ENCODE measurements at regions of chr7 and their contacts with region 1.

Region 1: DNA sequence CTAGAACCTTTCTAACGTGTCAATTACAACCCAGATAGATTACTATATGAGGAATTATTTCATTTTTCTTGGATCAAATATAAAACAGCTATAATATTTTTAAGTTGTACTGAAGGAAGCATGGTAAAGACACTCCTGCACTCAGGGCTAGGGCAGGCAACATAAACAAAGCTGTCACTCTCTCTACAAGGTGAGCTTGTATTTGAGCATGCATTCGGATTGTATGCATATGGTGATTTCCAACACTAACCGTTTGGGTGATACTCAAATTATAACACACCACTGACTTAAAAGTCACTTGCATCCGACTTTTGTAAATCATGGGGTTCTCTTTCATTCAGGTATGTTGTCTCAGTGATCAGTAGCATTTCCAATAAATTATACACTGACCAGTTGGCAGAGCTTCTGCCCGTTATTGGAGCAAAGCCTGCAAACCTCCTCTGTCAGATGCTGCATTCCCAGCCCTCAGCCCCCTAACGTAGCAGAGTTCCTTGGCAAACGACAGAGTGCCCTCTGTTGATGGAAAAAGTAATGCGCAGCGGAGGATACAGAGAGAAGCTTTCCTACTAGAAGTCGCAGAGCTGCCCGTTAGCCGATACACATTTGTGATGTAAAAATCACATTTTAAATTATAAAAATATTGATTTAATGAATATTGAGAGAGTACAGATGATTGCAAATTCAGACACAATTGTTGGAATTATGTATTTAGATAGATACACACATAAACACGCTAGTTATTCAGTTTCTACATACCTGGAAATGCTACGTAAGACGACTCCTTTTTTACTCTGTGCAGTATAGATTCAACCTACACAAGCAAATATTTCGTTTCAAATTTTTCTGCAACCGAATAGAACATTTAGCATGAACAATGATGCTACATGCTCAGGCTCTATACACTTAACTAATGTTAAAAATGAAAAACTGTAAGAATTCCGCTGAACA is 173.9 kb upstream of the SP4 start:
- DNase-seq: peak; percentile 82
- ATAC-seq: peak; percentile 96
- H3K4me3 Mint-ChIP-seq: peak overlapping the region; percentile 58
- H3K27ac Mint-ChIP-seq: no peak overlapping the region
- H3K4me1 Mint-ChIP-seq: peaks cover 58% of the 10 kb centered on the region
- H3K27me3 Mint-ChIP-seq: no peaks in the 10 kb centered on the region
- CTCF ChIP-seq: peak; percentile 58

Region 2: GRCh38 chr7:20651960-20652544 is 602.0 kb before region 1 on chr7:
- CTCF ChIA-PET with region 1: interaction called, 15 read pairs
- POLR2A ChIA-PET with region 1: no interaction called
- DNase-seq: no peak
- ATAC-seq: no peak
- H3K4me3 Mint-ChIP-seq: no peak overlapping the region
- H3K27ac Mint-ChIP-seq: no peak overlapping the region
- H3K4me1 Mint-ChIP-seq: peaks cover 59% of the 10 kb centered on the region
- H3K27me3 Mint-ChIP-seq: peaks cover 37% of the 10 kb centered on the region
- CTCF ChIP-seq: peak; percentile 27; the same call in 1 of the 2 replicates

Region 3: GRCh38 chr7:20786779-20787659 is 467.0 kb before region 1 on chr7 and contains the start of gene SP8:
- CTCF ChIA-PET with region 1: interaction called, 16 read pairs
- POLR2A ChIA-PET with region 1: no interaction called
- DNase-seq: peak; percentile 87
- ATAC-seq: peak; percentile 23
- H3K4me3 Mint-ChIP-seq: peak within 1 kb of the TSS; percentile 90
- H3K27ac Mint-ChIP-seq: peak within 1 kb of the TSS; percentile 91
- H3K4me1 Mint-ChIP-seq: peaks cover 53% of the 10 kb centered on the region
- H3K27me3 Mint-ChIP-seq: peaks cover 55% of the 10 kb centered on the region
- CTCF ChIP-seq: no peak
- total RNA-seq, gene SP8: 44.1 to 63.6 TPM (median 45.9 TPM) in 3 replicates

Region 4: DNA sequence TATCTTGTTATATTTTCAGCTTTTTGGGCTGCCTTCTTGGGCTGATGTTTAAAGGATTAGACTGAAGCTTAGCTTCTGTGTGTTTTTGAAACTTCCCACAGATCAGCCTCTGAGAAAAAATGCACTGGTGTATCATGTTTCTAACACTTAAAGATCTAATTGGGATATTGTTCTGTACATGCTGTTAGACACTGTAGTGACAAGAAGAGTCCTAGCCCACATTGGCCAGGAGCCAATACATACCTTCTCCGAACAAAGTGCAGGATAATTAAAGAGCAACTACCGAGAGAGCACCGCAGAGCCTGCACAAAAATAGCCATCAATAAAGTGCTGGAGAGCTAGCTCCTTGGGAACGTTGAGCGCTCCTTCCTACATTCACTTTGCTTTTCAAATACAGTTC is 178.0 kb before region 1 on chr7:
- CTCF ChIA-PET with region 1: interaction called, 11 read pairs
- POLR2A ChIA-PET with region 1: no interaction called
- DNase-seq: no peak
- ATAC-seq: peak; percentile 60
- H3K4me3 Mint-ChIP-seq: no peak overlapping the region; the same call in 1 of the 2 replicates
- H3K27ac Mint-ChIP-seq: peak overlapping the region; percentile 65
- H3K4me1 Mint-ChIP-seq: peaks cover 27% of the 10 kb centered on the region
- H3K27me3 Mint-ChIP-seq: no peaks in the 10 kb centered on the region
- CTCF ChIP-seq: no peak

Region 5: DNA sequence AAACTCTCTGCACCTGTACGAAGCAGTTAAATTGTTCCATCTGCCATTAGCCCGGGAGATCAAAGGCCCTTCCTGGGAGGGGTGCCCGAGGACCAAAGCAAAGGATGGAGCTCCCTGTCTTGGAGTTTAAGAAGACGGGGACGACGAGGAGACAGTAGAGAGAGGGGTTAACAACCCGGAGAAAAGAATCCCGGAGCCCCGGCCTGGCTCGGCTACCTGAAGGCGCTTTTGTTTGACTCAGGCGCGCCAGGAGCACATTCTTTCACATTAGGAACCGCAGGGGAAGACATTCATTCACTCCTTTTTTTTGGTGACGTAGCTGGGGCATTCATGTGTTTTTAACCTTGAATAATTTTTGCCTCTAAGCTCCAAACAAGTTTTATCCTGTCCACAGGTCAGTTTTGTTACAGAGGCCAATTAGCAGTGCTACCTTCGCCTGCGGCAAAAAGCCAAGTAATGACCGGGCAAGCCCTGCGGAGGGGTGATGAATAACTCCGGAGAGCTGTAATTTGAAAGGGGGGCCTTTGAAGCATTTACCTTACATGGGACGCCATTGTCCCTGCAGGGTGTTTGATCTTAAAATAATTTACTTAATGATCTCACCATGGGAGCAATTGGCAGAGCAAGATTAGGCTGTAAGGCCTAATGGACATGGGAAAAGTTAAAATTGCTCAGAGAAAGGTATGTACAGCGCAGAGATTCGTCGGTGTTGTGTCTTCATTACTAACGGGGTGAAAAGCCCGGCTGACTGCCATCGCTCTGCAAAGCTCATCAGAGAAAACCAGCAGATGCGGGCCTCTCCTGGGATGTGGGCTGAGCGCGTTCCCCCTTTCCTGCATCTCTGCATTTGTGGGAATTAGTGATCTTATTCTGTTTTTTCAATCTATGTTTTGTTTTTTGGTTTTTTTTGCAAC is 84.1 kb before region 1 on chr7:
- CTCF ChIA-PET with region 1: interaction called, 18 read pairs
- POLR2A ChIA-PET with region 1: no interaction called
- DNase-seq: peak; percentile 83
- ATAC-seq: peak; percentile 93
- H3K4me3 Mint-ChIP-seq: peak overlapping the region; percentile 71
- H3K27ac Mint-ChIP-seq: peak overlapping the region; percentile 97
- H3K4me1 Mint-ChIP-seq: peaks cover 59% of the 10 kb centered on the region
- H3K27me3 Mint-ChIP-seq: peaks cover 26% of the 10 kb centered on the region
- CTCF ChIP-seq: no peak

Region 6: DNA sequence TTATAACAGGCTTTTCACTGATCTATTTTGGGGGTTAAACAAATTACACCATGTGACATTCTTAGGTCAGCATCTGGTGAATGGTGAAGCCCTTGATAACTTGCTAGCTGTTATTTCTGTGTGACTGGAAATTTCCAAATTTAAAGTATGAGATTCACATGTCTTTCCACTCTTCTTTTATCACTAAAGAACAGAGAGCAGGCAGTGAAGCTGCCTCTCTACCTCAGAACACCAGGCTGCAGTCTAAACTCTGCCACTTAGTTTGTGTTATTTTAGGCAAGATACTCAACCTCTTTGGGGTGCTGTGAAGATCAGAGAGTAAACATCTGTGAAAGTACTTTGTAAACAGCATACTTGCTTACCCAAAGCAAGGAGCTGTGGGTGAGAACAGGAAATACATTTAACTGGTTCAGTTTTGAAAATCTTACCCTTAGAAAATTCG is 158.4 kb after region 1 on chr7:
- CTCF ChIA-PET with region 1: no interaction called
- POLR2A ChIA-PET with region 1: no interaction called
- DNase-seq: no peak
- ATAC-seq: peak; percentile 34
- H3K4me3 Mint-ChIP-seq: no peak overlapping the region
- H3K27ac Mint-ChIP-seq: peak overlapping the region; percentile 37
- H3K4me1 Mint-ChIP-seq: peaks cover 19% of the 10 kb centered on the region
- H3K27me3 Mint-ChIP-seq: no peaks in the 10 kb centered on the region; the same call in 1 of the 2 replicates
- CTCF ChIP-seq: no peak

Region 7: GRCh38 chr7:21767300-21767900 is 513.4 kb after region 1 on chr7:
- CTCF ChIA-PET with region 1: interaction called, 28 read pairs
- POLR2A ChIA-PET with region 1: no interaction called
- DNase-seq: peak; percentile 65
- ATAC-seq: peak; percentile 89
- H3K4me3 Mint-ChIP-seq: no peak overlapping the region
- H3K27ac Mint-ChIP-seq: no peak overlapping the region
- H3K4me1 Mint-ChIP-seq: peaks cover 61% of the 10 kb centered on the region
- H3K27me3 Mint-ChIP-seq: no peaks in the 10 kb centered on the region
- CTCF ChIP-seq: peak; percentile 40

Measured in WTC11 (cell line).